Activated naive CD4-positive, alpha-beta T cell treated with anti-CD3 and anti-CD28 coated beads, Interleukin-2, amount 10 ng/mL, durations not matched to agents 7 days and 5 days (primary cell): ENCODE measurements at regions of chr7 and their contacts with region 1.

Region 1: DNA sequence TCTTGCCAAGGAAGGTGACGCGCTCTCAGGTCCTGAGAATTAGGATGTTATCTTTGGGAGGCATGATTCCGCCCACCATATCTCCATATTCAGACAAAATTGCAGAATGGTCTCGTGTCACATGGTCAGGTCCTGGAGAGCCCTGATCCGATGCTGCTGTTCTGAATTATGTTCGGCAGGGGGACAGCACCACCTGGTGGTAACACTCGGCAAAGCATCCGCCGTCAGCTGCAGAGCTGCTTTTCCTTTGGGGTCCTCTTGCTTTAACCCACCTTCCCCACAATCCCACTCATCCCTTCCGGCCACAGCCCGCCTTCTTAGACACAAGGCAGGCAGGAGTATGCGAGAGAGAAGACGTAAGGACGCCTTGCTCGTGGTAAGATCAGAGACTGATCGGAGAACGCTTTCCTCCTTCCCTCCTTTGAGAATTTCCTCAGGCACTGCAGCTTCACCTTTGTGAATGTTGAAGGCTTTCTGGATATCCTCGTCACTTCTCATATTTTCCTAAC is 327.8 kb upstream of the C7orf33 start:
- DNase-seq: peak; percentile 71
- H3K4me3 Mint-ChIP-seq: no peak overlapping the region
- H3K27ac Mint-ChIP-seq: no peak overlapping the region
- H3K4me1 Mint-ChIP-seq: peaks cover 5% of the 10 kb centered on the region
- H3K27me3 Mint-ChIP-seq: peaks cover 12% of the 10 kb centered on the region

Region 2: GRCh38 chr7:148274118-148274517 is 11.3 kb after region 1 on chr7:
- CTCF ChIA-PET with region 1: interaction called, 10 read pairs
- DNase-seq: no peak
- H3K4me3 Mint-ChIP-seq: no peak overlapping the region
- H3K27ac Mint-ChIP-seq: no peak overlapping the region
- H3K4me1 Mint-ChIP-seq: no peaks in the 10 kb centered on the region
- H3K27me3 Mint-ChIP-seq: no peaks in the 10 kb centered on the region

Region 3: GRCh38 chr7:148485618-148486017 is 222.8 kb after region 1 on chr7:
- CTCF ChIA-PET with region 1: interaction called, 13 read pairs
- DNase-seq: no peak
- H3K4me3 Mint-ChIP-seq: no peak overlapping the region
- H3K27ac Mint-ChIP-seq: no peak overlapping the region
- H3K4me1 Mint-ChIP-seq: peaks cover 2% of the 10 kb centered on the region
- H3K27me3 Mint-ChIP-seq: peaks cover 15% of the 10 kb centered on the region

Region 4: GRCh38 chr7:148527707-148528168 is 265.0 kb after region 1 on chr7:
- CTCF ChIA-PET with region 1: interaction called, 10 read pairs
- DNase-seq: peak; percentile 93
- H3K4me3 Mint-ChIP-seq: no peak overlapping the region
- H3K27ac Mint-ChIP-seq: no peak overlapping the region
- H3K4me1 Mint-ChIP-seq: no peaks in the 10 kb centered on the region
- H3K27me3 Mint-ChIP-seq: peaks cover 33% of the 10 kb centered on the region